ENCODE measurements at regions of chr17 and their contacts with region 1.

Region 1: DNA sequence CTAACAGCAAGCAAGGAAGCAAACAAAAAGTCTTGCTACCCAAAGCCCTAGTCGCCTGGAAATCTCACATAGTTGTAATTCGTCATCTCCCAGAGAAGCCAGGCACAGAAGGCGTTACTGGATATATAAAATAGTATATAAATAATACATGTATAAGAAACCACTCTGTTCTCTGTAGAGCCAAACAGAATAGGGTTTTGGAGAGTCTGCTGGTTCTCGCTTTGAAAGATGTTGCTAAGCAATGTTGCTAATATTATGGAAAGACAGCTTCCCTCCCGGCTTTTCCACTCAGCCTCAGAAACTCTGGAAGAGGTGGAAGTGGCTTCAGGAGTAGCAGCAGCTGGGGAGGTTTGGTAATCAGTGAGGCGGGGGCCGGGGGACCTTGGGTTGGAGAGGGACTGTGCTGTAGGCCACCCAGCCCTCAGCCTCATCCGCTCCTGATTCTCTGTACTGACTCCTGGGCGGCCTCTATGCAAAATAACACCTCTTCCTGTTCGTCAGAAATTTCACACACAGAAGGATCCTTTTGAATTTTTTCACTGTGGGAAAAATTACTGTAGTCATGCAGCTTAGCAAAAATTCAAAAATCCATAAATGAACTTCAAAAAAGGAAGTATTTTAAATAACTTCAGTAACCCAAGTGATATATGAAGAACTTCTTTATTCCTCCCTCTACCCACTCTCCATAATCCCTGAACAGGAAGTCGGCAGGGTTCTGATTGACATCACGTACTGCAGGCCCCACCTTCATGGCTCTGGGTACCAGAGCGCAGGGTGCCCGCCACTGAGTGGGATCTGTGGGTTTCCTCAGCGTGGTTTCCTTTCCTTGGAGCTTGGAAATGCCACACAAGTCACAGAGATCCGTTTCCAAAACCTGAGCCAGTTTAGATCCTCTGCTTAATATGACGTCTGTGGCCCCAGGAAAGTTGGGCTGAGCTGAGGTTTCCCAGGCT is 51.4 kb downstream of the RAP1GAP2 start:
- DNase-seq: no peak
- ATAC-seq: no peak

Region 2: DNA sequence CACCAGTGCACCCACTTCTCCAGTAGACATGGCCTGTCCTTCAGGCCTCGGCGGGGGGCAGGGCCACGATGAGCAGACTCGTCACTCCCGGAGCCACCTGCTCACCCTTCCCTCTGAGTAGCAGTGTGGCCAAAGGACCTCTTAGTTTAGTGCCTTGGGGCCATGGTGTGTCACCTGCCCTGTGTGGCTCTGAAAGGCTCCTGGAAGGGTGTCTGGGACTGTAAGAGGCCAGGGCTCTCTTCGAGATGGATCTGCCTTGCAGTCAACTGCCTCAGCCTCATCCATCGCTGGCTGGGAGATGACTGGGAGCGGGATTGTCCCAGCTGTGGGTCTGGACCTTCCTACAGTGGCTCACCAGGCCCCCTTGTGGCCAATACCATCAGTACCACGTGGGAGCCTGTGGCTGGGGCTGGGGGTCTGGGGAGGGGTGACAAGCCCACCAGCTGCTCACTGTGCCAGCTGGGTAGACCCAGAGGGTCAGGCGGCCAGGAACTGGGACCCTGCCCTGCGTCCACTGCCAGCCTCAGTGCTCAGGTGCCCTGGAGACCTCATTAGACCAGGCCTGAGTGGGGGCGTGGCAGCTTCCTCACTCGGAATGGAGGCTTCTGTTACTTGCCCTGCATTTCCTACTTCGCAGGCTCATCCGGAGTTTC is 82.3 kb after region 1 on chr17:
- intact Hi-C with region 1: loop called (anchors 5 kb)
- DNase-seq: peak; percentile 52
- ATAC-seq: peak; percentile 77

Region 3: GRCh38 chr17:3012926-3013581 is 165.4 kb after region 1 on chr17:
- intact Hi-C with region 1: loop called (anchors 2 kb)
- DNase-seq: peak; percentile 74
- ATAC-seq: peak; percentile 92